Activated B cell treated with CpG ODN at 0.5 μM for 24 hours (primary cell): ENCODE measurements at regions of chr3 and their contacts with region 1.

Region 1: DNA sequence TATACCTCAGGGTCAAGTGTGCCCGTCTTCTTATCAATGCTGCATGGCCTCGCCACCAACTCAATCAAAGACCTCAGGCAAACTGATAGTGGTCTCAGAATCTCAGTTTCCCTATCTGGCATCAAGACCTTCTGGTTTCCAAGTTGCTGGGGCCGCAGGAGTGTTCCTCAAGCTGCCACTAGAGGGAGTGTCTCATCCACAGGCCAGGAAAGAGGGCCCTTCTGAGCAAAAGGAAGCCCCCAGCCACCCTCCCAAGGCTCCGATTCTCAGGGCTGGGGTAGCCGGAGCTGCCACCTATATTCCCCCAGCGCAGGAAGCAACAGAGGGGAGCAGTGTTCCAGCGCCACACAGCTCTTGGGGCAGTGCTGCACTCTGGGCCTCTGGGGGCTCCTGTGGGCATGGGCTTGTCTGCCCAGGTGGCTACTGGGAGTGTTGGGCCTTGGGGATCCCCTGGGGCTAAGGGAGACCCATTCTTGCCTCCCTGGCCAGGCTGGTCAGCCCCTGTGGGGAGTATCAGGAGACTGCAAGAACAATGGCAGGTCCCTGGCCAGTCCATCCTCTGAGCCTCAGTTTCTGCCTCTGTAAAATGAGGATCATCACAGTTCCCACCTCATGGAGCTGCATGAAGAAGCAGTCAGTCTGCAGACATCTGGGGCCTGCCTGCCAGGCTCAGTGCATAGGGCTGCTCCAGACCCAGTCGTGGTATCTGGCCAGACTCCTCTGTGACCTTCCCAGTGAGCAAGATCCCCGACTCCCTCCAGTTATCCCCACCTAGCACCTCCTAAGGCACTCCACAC is 23.4 kb upstream of the SEC13 start:
- DNase-seq: peak; percentile 50
- ATAC-seq: peak; percentile 61
- H3K4me3 Mint-ChIP-seq: no peak overlapping the region
- H3K27ac Mint-ChIP-seq: no peak overlapping the region
- H3K4me1 Mint-ChIP-seq: peaks cover 5% of the 10 kb centered on the region
- H3K27me3 Mint-ChIP-seq: peaks cover 2% of the 10 kb centered on the region
- CTCF ChIP-seq: peak; percentile 61

Region 2: DNA sequence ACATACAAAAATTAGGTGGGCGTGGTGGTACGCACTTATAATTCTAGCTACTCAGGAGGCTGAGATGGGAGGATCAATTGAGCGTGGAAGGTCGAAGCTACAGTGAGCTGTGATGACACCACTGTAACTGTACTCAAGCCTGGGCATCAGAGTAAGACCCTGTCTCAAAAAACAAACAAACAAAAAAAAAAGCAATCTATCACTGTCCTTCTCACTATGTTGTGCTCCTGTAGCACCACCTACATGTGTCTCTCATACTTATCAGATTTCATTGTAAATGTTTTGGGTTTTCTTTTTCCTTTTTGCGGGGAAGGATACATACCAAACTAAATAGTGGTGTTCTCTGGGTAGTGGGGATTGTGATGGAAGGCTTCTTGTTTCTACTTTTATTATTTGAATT is 303.3 kb before region 1 on chr3:
- CTCF ChIA-PET with region 1: no interaction called
- POLR2A ChIA-PET with region 1: no interaction called
- intact Hi-C with region 1: no loop called
- DNase-seq: no peak
- ATAC-seq: no peak
- H3K4me3 Mint-ChIP-seq: no peak overlapping the region
- H3K27ac Mint-ChIP-seq: no peak overlapping the region
- H3K4me1 Mint-ChIP-seq: no peaks in the 10 kb centered on the region
- H3K27me3 Mint-ChIP-seq: no peaks in the 10 kb centered on the region
- CTCF ChIP-seq: no peak

Region 3: GRCh38 chr3:10248184-10249080 is 95.9 kb before region 1 on chr3 and contains the start of gene TATDN2:
- CTCF ChIA-PET with region 1: no interaction called
- POLR2A ChIA-PET with region 1: no interaction called
- intact Hi-C with region 1: no loop called
- DNase-seq: peak; percentile 88
- ATAC-seq: peak; percentile 97
- H3K4me3 Mint-ChIP-seq: peak within 1 kb of the TSS; percentile 95
- H3K27ac Mint-ChIP-seq: peak within 1 kb of the TSS; percentile 91
- H3K4me1 Mint-ChIP-seq: peaks cover 39% of the 10 kb centered on the region
- H3K27me3 Mint-ChIP-seq: no peaks in the 10 kb centered on the region
- CTCF ChIP-seq: no peak
- total RNA-seq, gene TATDN2: 55.6 and 56.2 TPM in 2 replicates

Region 4: GRCh38 chr3:10522646-10523303 is 178.4 kb after region 1 on chr3:
- CTCF ChIA-PET with region 1: interaction called, 19 read pairs
- POLR2A ChIA-PET with region 1: no interaction called
- intact Hi-C with region 1: loop called (anchors 1 kb)
- DNase-seq: no peak
- ATAC-seq: peak; percentile 28
- H3K4me3 Mint-ChIP-seq: no peak overlapping the region
- H3K27ac Mint-ChIP-seq: no peak overlapping the region
- H3K4me1 Mint-ChIP-seq: peaks cover 10% of the 10 kb centered on the region
- H3K27me3 Mint-ChIP-seq: peaks cover 29% of the 10 kb centered on the region
- CTCF ChIP-seq: no peak